Gastrocnemius medialis (tissue), 4 donors: ENCODE measurements at regions of chr3 and their contacts with region 1.

Region 1: DNA sequence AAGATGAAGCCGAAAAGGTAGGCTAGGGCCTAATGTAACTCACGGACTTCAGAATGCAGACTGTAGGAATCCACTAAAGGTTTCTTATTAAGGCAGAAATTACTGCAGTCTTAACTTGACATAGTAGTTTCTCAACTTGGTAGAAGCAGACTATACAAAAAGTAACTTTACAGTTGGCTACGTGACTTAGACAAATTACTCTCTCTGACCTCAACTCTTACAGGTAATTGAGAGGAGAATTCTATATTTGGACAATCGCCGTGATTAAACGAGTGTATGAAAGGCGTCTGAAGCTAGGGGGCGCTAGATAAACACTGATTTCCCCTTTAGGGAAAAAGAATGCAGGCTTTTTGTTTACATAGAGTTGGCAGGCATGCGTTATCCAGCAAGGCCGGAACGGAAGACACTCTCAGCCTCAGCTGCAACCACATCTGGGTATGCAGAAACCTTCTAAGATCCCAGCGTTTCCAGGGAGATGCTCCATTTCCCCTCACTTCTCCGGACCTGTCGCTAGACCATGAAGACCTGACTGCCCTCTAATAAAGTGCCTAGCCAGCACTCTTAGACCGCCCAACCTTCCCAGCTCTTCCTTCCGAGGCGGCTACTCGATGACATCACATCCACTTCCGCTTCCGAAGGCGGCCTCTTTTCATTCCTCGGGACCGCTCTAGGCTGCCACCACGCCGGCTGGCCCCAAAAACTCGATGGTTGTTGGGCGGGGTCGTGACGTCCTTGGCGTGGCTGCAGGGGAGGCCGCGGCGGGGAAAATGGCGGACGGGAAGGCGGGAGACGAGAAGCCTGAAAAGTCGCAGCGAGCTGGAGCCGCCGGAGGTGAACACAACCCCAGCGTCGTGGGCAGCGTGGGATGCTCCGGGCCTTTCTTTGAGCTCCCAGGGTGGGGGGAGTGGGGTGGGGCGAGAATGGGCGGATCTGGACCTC is at the start of gene PCNP:
- DNase-seq: peak; percentile 98
- ATAC-seq: peak; percentile 96 to 97
- H3K4me3 ChIP-seq: peak within 1 kb of the TSS; percentile 64 to 92 (median 81)
- H3K27ac ChIP-seq: peak within 1 kb of the TSS; percentile 94 to 97 (median 96)
- H3K4me1 ChIP-seq: peaks cover 41 to 43% of the 10 kb centered on the region in 2 donors
- H3K27me3 ChIP-seq: no peaks in the 10 kb centered on the region
- CTCF ChIP-seq: peak; percentile 87 to 95 (median 93)
- POLR2A ChIP-seq: peak; percentile 79 to 87
- total RNA-seq, gene PCNP: 57.6 to 68.6 (median 63.2) TPM

Region 2: DNA sequence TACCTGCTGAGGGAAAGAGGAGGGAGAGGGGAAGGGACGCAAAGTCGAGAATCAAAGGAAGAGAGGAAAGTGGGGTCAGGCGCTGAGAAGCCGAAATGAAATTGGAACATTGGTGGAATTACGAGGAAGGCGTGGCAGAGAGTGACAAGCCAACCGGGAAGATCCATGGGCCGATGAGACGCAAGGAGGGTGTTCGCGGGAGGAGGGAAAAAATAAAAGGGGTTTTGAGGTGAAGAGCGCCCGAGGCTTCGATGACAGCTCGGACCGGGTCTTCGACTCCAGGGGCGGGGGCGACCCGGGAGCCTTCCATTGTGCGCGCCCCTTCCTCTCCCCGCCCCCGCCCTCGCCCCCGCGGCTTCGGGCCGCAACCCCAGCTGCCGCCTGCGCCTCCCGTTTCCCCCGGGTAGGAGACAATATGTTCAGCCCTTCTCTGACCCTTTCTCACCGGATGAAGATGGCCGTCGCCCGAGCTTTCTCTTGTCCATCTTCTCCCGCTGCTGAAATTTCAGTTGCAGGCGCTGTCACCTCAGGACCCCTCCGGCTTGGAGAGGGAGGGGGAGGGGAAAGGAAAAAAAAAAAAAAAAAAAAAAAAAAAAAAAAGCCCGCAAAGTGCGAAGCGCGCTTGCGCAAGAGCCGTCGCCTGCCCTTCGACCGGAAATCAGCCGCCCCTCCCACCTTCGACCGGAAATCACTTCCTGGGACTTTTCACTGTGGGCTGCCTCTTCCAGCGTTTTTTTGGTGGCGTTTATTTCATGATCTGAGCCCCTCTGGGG is 60.9 kb before region 1 on chr3 and contains the start of gene SENP7:
- in situ Hi-C with region 1: loop called in 2 of 4 experiments (anchors 10 kb)
- intact Hi-C with region 1: loop called (anchors 2 kb)
- DNase-seq: peak; percentile 70 to 77
- ATAC-seq: peak; percentile 85 to 88
- H3K4me3 ChIP-seq: peak within 1 kb of the TSS; percentile 66 to 91 (median 85)
- H3K27ac ChIP-seq: peak within 1 kb of the TSS; percentile 86 to 94 (median 90)
- H3K4me1 ChIP-seq: peaks cover 0 to 5% of the 10 kb centered on the region in 2 donors
- H3K27me3 ChIP-seq: peaks cover 0 to 7% (median 0%) of the 10 kb centered on the region in 3 donors
- CTCF ChIP-seq: no peak
- POLR2A ChIP-seq: no peak
- total RNA-seq, gene SENP7: 5.3 to 16.8 (median 5.9) TPM

Region 3: DNA sequence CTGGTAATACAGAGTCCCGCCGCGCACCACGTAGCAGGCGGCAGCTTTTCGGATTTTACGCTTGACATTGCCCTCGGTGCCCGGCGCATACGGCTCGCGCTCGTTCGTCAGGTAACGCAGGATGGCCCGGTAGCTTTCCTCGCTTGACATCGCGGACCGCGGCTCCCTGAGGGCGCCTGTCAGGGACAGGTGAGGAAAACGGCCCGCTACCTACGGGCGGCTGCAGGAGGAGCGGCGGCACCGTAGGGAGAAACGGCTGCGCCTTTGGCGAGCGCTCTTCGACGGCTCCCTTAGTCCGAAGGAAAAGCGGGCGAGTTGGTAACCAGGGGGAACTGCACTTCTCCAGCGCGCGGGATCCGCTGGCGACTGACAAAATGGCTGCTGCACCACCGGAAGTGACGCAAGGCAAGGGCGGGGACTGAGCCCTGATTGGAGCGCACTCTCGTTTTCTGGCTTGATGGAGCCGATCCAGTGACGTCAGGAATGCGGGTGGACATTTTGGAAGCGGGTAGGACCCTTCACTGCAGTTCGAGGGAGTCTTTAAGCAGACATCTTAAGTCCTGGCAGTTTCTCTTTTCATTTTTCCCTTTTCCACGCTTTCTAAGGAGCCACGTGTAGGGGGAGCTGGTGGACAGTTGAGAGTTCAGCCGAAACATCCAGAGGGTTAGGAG is 103.2 kb after region 1 on chr3 and contains the start of gene ZBTB11:
- in situ Hi-C with region 1: loop called in 1 of 4 experiments (anchors 10 kb)
- intact Hi-C with region 1: loop called (anchors 1 kb)
- DNase-seq: peak; percentile 99
- ATAC-seq: peak; percentile 96 to 98
- H3K4me3 ChIP-seq: peak within 1 kb of the TSS; percentile 86 to 100 (median 99)
- H3K27ac ChIP-seq: peak within 1 kb of the TSS; percentile 95 to 99 (median 98)
- H3K4me1 ChIP-seq: peaks cover 17 to 23% of the 10 kb centered on the region in 2 donors
- H3K27me3 ChIP-seq: no peaks in the 10 kb centered on the region
- CTCF ChIP-seq: peak in 2 of 5 experiments; percentile 32 to 35
- POLR2A ChIP-seq: peak; percentile 88 to 92
- total RNA-seq, gene ZBTB11: 14.6 to 20.9 (median 16.1) TPM

Region 4: GRCh38 chr3:101724329-101725193 is 150.8 kb after region 1 on chr3 and contains the start of gene CEP97:
- in situ Hi-C with region 1: no loop called
- intact Hi-C with region 1: loop called (anchors 2 kb)
- DNase-seq: peak; percentile 86 to 90
- ATAC-seq: peak; percentile 98 to 99
- H3K4me3 ChIP-seq: peak within 1 kb of the TSS; percentile 76 to 87 (median 85)
- H3K27ac ChIP-seq: peak within 1 kb of the TSS; percentile 74 to 81 (median 76)
- H3K4me1 ChIP-seq: peaks cover 10 to 32% of the 10 kb centered on the region in 2 donors
- H3K27me3 ChIP-seq: no peaks in the 10 kb centered on the region
- CTCF ChIP-seq: no peak
- POLR2A ChIP-seq: peak; percentile 33
- total RNA-seq, gene CEP97: 8.3 to 20.0 (median 13.2) TPM

Region 5: DNA sequence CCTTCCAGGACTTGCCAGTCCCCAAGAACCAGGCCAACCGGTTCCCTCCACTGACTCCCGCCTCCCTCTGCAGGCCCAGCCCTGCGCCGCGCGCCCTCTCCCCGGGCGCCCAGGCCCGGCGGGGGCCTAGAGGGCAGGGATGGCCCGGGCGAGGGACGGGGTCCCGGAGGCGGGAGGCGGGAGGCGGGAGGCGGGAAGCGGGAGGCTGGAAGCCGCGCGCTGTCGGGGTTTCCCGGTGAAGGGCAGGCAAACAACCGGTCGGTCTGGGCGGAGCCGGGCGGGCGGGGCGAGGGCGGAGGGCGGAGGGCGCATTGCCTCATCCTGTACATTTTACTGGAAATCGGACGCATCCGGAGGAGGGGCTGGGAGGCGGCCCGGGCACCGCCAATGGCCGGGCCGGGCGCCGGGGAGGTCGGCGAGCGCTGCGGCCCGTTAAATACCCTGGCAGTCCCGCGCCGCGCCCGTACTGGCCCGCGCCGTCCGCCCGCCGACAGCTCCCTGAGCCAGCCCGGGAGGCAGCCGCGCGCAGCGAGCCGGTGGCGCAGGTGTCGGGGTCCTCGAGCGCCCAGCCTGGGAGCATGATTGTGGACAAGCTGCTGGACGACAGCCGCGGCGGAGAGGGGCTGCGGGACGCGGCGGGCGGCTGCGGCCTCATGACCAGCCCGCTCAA is 275.5 kb after region 1 on chr3 and contains the start of gene NFKBIZ:
- in situ Hi-C with region 1: no loop called
- intact Hi-C with region 1: loop called (anchors 10 kb)
- DNase-seq: peak; percentile 93 to 95
- ATAC-seq: peak; percentile 93 to 94
- H3K4me3 ChIP-seq: peak within 1 kb of the TSS; percentile 73 to 89 (median 85)
- H3K27ac ChIP-seq: peak within 1 kb of the TSS; percentile 83 to 96 (median 94)
- H3K4me1 ChIP-seq: peaks cover 6% of the 10 kb centered on the region in 2 donors
- H3K27me3 ChIP-seq: no peaks in the 10 kb centered on the region
- CTCF ChIP-seq: peak in 1 of 5 experiments; percentile 18
- POLR2A ChIP-seq: peak; percentile 96 to 99
- total RNA-seq, gene NFKBIZ: 9.2 to 25.9 (median 20.6) TPM

Region 6: GRCh38 chr3:102394517-102394916 is 820.8 kb after region 1 on chr3:
- in situ Hi-C with region 1: no loop called
- intact Hi-C with region 1: no loop called
- DNase-seq: no peak
- ATAC-seq: no peak
- H3K4me3 ChIP-seq: no peak overlapping the region
- H3K27ac ChIP-seq: no peak overlapping the region
- H3K4me1 ChIP-seq: no peaks in the 10 kb centered on the region
- H3K27me3 ChIP-seq: no peaks in the 10 kb centered on the region
- CTCF ChIP-seq: no peak
- POLR2A ChIP-seq: no peak